ENCODE measurements at regions of chr20 and their contacts with region 1.

Region 1: GRCh38 chr20:57596998-57597939 is 23.0 kb downstream of the ZBP1 start:
- DNase-seq: peak; percentile 66 to 91 (median 89)
- ATAC-seq: peak; percentile 80 to 84
- H3K4me3 ChIP-seq: no peak overlapping the region
- H3K27ac ChIP-seq: no peak overlapping the region
- H3K4me1 ChIP-seq: no peaks in the 10 kb centered on the region
- H3K27me3 ChIP-seq: no peaks in the 10 kb centered on the region

Region 2: DNA sequence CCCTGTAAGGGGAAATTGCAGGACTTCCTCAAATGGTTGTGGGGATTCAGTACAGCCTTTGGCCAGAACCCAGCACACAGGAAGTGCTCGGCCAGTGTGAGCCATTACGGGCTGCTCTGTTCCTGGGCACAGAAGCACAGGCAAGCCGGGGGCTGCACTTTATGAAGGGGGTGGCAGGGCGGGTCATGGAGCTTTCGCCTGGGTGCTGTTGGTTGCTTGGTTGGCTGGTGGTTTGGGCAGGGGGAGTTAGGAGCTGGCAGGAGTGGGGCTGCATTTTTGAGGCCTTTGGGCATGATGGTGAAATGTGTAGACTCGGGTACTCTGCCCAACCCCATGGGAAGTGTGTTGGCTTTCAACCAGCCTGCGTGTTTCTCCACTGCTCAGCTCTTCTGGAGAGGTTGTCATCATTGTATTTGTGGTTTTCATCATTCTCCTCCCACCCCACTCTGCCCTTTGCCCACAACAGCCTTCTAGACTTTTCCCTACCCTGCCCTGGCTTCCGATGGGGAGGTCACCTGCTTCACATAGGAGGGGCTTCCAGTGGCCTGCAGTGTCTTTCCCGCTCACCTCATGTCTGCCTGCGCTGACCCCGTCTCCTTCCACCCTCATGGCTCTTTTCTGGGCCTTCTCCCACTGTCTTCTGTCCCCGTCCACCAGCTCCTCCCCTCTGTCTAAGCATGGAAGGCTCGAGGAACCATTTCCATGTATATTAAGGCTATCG is 222.2 kb before region 1 on chr20:
- intact Hi-C with region 1: loop called in 1 of 4 experiments (anchors 10 kb)
- DNase-seq: peak in 1 of 3 donors; percentile 75
- ATAC-seq: peak; percentile 30 to 68
- H3K4me3 ChIP-seq: no peak overlapping the region
- H3K27ac ChIP-seq: peak overlapping the region; percentile 53
- H3K4me1 ChIP-seq: no peaks in the 10 kb centered on the region
- H3K27me3 ChIP-seq: no peaks in the 10 kb centered on the region

Region 3: DNA sequence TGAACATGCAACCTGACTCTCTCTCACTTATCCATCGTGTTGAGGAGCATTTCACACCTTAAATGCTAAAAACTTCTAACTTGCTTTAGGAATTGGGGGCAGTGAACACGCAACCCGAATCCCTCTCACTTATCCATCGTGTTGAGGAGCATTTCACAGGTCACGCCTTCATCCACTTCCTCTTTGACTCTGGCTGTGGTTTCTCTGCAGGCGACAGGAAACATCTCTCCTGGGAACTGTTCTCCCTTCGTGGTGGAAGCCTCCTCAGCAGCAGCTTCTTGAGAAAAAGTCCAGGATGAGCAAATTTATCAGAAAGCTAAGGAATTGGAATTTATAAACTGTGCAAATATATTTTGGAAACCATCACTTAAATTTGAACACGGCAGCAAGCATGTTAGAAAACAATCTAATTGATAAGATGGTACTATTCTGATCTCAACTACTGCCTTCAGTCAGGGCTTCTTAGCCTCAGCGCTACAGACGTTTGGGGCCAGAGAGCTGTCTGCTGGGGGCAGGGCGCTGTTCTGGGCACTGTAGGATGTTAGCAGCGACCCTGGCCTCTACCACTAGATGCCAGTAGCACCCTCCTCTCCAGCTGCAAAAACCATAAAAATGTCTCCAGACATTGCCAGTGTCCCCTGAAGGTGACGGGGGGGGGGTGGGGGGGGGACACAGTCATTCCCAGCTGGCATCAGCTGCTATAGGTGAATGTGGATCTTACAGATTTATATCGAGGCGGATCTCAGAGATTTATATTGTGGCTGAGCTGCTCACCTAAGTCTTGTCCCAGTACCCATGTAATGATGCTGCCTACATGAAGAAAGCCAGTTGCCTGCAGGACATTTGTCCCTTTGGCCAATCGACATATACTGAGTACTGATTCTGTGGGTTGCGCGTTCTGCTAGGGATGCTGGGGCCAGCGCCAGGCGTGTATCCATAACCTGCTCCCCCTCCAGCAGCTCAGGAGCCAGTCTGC is 98.6 kb before region 1 on chr20:
- intact Hi-C with region 1: no loop called
- DNase-seq: peak in 2 of 3 donors; percentile 56 to 62
- ATAC-seq: peak; percentile 40 to 48
- H3K4me3 ChIP-seq: no peak overlapping the region
- H3K27ac ChIP-seq: no peak overlapping the region
- H3K4me1 ChIP-seq: no peaks in the 10 kb centered on the region
- H3K27me3 ChIP-seq: no peaks in the 10 kb centered on the region

Region 4: DNA sequence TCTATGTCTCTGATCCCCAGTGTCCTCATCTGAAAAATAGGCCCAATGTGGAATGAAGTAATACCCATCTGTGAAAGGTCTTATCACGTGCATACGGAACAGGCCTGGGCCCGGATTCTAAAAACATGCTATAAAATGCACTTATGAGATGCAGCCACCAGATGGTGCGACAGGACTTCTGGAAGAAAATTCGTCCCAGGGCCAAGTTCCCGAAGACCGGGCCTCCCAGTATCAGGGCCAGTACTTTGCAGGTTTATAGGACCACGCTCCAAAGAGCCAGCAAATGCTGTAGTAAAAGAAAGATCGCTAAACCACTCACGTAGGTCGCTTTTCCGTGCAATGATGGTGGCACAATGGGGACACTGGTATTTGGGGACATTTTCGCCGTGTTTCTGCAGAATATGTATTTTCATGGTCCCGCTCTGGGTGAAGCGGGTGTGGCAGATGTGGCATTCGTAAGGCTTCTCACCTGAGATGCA is 83.0 kb before region 1 on chr20:
- intact Hi-C with region 1: loop called (anchors 1 to 5 kb)
- DNase-seq: peak; percentile 67 to 78 (median 75)
- ATAC-seq: peak; percentile 85 to 89
- H3K4me3 ChIP-seq: no peak overlapping the region
- H3K27ac ChIP-seq: no peak overlapping the region
- H3K4me1 ChIP-seq: no peaks in the 10 kb centered on the region
- H3K27me3 ChIP-seq: no peaks in the 10 kb centered on the region

Region 5: DNA sequence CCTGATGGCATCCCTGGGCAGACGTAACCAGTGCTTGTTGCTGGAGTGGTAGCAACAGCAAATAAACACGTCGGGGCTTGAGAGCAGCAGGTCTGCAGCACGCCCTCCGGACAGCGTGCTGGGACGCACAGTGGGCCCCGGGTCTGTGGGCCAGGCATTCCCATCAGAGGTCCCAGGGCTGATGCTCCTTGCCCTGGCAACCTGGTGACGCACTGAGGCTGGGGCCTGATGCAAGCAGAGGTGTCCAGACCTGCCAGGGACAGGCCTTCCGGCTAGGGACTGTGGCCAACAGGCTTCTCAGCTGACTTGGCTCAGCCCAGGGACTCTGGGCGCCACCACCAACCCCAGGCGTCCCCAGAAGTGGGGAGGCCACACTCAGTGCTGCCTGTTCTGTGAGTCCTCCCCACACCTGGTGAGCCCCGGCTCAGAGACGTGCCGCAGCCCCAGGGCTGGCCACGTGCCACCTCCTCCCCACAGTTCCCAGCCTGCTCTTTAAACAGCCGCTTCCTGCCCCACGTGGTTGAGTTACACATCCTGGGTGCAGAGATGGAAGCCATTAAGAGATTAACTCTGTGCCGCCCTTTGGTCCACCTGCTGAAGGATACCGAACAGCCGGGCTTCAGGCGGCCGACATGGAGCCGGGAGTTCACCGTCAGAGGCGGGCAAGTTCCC is 60.3 kb after region 1 on chr20:
- intact Hi-C with region 1: no loop called
- DNase-seq: peak; percentile 56 to 75 (median 71)
- ATAC-seq: peak; percentile 59 to 73
- H3K4me3 ChIP-seq: no peak overlapping the region
- H3K27ac ChIP-seq: no peak overlapping the region
- H3K4me1 ChIP-seq: no peaks in the 10 kb centered on the region
- H3K27me3 ChIP-seq: no peaks in the 10 kb centered on the region

Measured in right cardiac atrium (tissue), 5 donors.